ENCODE measurements at regions of chr3 and their contacts with region 1.

Region 1: DNA sequence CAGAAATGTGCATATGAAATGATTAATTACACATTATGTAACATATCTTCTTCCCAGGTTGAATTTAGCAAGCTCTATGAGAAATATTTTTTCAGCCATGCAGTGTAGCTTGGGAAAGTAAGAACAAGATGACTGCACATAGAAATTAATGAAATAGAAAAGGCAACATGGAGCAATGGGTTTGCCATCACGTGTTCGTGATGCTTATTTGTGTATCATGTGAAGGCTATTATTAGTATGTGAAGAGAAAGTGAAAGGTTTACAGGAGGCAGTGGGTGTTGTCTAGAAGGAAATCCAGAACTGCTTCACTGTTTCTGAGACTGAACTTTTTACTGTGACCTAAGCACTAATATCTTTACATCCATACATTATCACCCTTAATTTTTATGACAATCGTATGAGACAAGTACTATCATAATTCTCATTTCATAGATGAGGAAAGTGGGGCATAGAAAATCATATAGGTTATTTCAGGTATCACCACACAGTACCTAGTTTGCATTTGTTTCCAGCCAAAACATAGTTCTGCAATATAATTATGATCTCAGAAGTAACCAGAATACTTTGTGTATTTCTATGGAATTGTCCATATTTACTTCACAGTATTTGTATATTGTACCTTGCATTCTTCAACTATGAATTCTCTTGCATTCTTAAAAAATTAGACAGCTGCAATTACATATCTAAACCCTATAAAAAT is 14.9 kb downstream of the SERPINI1 start:
- DNase-seq: no peak

Region 2: GRCh38 chr3:167798443-167798842 is 48.0 kb after region 1 on chr3:
- intact Hi-C with region 1: loop called (anchors 5 kb)
- DNase-seq: no peak

Region 3: GRCh38 chr3:167895684-167896083 is 145.3 kb after region 1 on chr3:
- intact Hi-C with region 1: no loop called
- DNase-seq: no peak